Gastrocnemius medialis (tissue), 4 donors: ENCODE measurements at regions of chr3 and their contacts with region 1.

Region 1: DNA sequence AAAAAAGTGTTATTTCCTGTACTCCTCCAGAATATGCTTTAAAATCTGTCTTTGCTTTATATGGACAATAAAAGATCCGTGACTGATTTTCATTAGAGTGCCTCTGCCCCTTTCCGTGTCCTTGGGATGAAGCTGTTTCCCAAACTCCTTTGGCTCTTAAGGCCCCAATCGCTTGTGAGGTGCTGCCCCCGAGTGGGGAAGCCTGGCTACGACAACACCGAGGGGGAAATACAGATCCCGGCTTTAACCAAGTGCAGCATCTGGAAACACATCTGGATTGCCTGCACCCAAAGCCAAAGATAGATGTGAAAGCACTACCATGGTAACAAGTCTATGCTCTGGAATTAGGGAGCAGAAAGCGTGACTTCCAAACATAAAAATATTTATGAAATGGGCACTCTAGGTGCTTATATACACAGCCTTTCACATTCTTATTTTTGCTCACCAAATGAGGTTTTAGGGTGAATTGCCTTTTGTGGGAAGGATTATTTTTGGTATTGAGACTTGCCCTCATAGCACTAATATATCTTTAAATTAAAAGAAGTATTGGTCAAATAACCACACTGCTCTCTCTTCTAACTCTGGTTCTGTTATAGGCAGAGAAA is 40.6 kb upstream of the ADCY5 start:
- DNase-seq: peak; percentile 12 to 37
- ATAC-seq: peak; percentile 72 to 77
- H3K4me3 ChIP-seq: no peak overlapping the region
- H3K27ac ChIP-seq: peak overlapping the region in 1 of 4 donors; percentile 7
- H3K4me1 ChIP-seq: no peaks in the 10 kb centered on the region
- H3K27me3 ChIP-seq: no peaks in the 10 kb centered on the region
- CTCF ChIP-seq: peak; percentile 57 to 86 (median 71)
- POLR2A ChIP-seq: no peak

Region 2: DNA sequence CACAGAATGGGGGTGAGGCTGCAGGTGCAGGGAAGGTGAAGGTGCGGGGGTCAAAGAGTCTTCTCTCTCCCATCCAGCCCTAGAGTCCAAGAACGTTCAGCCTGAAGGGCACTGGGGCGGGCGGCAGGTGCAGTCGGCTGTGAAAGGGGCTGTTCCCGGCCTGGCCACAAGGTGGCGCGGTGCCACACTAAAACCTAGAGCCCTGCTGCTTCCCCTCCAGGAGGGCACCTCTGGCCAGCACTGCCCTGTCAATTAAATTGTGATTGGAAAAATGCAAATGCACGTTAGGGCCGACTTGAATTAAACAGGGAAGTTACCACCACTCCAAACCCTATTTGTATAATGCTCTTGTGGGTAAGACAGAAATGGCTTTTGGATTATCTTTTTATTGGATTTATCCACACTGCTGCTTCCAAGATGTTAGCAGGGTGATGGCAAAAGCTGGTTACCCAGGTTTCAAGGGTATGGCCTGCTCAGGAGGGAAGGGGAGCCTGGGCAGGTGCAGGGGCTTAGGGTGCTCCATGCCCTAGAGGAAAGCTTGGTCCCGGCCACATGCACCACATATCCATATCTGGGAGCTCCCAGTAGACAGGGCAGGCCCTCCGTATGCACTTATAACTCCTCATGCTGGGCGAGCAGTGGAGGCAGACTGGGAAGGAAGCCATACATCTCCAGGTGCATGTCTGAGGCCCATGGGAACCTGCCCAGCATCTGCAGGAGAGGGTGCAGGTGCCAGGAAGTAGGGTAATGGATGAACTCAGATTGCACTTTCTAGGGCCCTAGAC is 160.5 kb before region 1 on chr3:
- in situ Hi-C with region 1: loop called (anchors 5 to 25 kb)
- intact Hi-C with region 1: loop called (anchors 1 kb)
- DNase-seq: peak; percentile 49 to 63
- ATAC-seq: peak; percentile 70 to 84
- H3K4me3 ChIP-seq: no peak overlapping the region
- H3K27ac ChIP-seq: no peak overlapping the region
- H3K4me1 ChIP-seq: no peaks in the 10 kb centered on the region
- H3K27me3 ChIP-seq: no peaks in the 10 kb centered on the region
- CTCF ChIP-seq: peak; percentile 75 to 95 (median 88)
- POLR2A ChIP-seq: no peak

Region 3: GRCh38 chr3:123449102-123449996 is 40.2 kb before region 1 on chr3:
- in situ Hi-C with region 1: no loop called
- intact Hi-C with region 1: loop called (anchors 2 kb)
- DNase-seq: no peak
- ATAC-seq: peak; percentile 38 to 51
- H3K4me3 ChIP-seq: peak overlapping the region; percentile 56 to 74 (median 64)
- H3K27ac ChIP-seq: peak overlapping the region; percentile 57 to 73 (median 64)
- H3K4me1 ChIP-seq: peaks cover 4 to 5% of the 10 kb centered on the region in 2 donors
- H3K27me3 ChIP-seq: peaks cover 14 to 35% (median 25%) of the 10 kb centered on the region in 3 donors
- CTCF ChIP-seq: no peak
- POLR2A ChIP-seq: no peak

Region 4: DNA sequence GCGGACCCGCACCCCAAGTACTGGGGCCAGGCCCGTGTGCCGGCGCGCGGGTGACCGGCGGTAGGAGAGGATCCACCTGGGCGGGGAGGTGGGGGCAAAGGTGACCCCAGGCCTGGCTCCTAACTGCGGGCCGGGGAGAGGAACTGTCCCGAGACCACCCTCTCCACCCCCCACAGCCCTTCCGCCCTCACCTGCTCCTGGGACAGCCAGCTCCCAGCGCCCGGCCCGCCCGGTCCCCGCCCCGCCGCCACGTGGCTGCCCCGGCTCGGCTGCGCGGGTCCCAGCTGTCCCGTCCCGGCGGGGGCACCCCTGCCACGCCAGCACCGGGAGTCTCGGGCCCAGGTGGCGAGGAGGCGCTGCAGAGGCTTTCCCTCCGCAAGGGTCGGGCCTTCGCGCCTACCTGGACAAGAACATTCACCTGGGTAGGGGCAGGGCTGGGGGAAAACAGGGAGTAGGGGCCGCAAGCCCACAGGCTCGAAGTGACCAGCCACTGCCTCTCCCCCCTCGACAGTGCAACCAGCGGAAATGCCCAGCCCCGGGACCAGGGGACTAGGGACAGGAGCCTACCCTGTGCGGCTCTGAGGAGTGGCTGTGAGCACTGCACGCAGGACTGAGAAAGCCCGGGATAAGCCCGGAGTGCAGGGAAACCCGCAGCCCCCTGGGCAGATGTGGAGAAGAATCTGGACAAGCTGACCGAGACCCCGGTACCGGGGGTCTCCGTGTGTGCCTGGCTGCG is 1723.2 kb after region 1 on chr3 and contains the start of gene SLC12A8:
- in situ Hi-C with region 1: no loop called
- intact Hi-C with region 1: no loop called
- DNase-seq: no peak
- ATAC-seq: peak in 1 of 2 donors; percentile 40
- H3K4me3 ChIP-seq: peak within 1 kb of the TSS; percentile 36 to 61 (median 52)
- H3K27ac ChIP-seq: no peak within 1 kb of the TSS
- H3K4me1 ChIP-seq: peaks cover 0 to 5% of the 10 kb centered on the region in 2 donors
- H3K27me3 ChIP-seq: peaks cover 29 to 36% (median 30%) of the 10 kb centered on the region in 3 donors
- CTCF ChIP-seq: no peak
- POLR2A ChIP-seq: no peak
- total RNA-seq, gene SLC12A8: 1.0 TPM in 1 of 4 donors, not detected in the others